ENCODE measurements at regions of chr2 and their contacts with region 1.

Region 1: DNA sequence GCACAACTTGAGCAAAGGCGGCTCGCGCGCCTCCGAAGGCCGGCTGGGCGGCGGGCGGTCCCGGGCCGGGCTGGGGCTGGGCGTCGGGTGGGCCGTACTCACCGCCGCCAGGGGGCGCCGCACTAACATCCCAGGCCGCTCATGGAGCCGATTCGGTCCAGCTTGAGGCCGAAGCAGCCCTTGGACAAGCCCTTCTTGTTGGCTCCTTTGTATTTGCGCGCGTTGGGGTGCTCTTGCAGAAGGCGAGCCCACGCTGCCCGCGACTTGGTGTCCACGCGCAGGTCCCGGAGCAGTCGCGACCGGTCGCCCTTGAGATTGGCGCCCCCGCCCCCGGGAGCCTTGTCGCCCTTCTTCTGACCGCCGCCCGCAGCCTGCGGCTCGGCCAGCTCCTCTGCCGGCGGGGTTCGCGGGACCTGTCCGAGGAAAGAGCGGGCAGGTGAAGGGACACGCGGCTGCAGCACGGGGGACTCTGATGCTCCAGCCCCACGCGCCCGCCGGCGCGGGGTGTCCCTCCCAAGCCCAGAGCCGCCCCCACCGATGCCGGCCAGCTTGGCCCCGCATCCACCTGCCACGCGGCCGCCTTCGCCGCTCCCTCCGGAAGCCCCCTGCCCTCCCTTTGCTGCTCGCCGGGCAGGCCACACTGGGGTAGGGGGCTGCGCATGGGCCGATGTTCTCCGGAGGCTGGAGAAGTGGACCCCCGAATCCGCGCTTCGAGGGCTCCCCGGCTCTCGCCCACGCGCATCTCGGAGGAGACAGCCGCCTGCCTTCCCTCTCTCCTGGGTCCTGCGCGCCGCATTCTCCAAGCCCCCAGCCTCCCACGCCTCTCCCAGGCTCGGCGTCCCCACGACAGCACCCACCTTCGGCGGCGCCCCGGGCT is 655 bp downstream of the NPPC start:
- DNase-seq: peak; percentile 88
- ATAC-seq: peak; percentile 41
- H3K4me3 Mint-ChIP-seq: peak overlapping the region; percentile 74
- H3K27ac Mint-ChIP-seq: no peak overlapping the region
- H3K4me1 Mint-ChIP-seq: peaks cover 15% of the 10 kb centered on the region
- H3K27me3 Mint-ChIP-seq: peaks cover 58% of the 10 kb centered on the region
- CTCF ChIP-seq: peak; percentile 95

Region 2: DNA sequence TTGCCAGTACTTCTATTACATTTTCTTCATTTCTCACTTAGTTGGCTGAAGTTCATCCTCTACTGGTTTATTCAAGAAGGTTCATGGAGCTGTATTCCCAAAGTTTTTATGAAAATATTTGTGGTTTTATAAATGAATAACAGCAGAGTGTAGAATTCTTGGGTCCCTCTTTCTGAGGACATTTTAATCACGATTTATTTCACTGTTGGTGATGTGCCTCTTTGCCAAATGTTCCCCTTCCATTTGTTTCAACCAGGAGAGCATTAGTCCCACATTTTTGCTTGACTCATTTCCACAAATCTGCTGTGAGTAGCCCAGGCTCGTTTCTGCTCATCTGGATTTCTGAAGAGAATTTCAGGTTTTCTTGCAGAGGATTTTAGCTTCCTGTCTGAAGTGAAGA is 118.5 kb before region 1 on chr2:
- CTCF ChIA-PET with region 1: no interaction called
- POLR2A ChIA-PET with region 1: no interaction called
- DNase-seq: no peak
- ATAC-seq: no peak
- H3K4me3 Mint-ChIP-seq: no peak overlapping the region
- H3K27ac Mint-ChIP-seq: no peak overlapping the region
- H3K4me1 Mint-ChIP-seq: peaks cover 10% of the 10 kb centered on the region
- H3K27me3 Mint-ChIP-seq: no peaks in the 10 kb centered on the region
- CTCF ChIP-seq: no peak

Region 3: DNA sequence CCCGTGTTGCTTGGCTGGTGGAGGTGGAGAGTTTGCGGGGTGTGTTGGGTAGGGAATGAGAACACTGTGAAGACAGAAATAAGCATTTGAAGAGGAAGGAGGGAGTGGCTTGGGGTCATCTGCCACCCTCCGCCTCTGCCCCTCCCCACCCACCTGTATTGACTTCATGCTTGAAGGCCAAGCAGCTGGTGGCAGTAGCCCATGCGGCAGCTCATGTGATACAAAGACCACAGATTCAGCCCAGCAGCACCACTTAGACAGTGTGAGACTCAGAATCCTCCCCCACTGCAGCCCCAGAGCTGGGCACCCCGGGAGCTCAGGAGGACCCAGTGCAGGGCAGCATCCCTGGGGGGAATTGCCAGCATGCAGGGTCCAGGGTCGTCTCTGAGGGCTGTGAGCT is 14.8 kb before region 1 on chr2:
- CTCF ChIA-PET with region 1: interaction called, 48 read pairs
- POLR2A ChIA-PET with region 1: interaction called, 3 read pairs
- DNase-seq: no peak
- ATAC-seq: peak; percentile 19; the same call in 1 of the 2 replicates
- H3K4me3 Mint-ChIP-seq: no peak overlapping the region
- H3K27ac Mint-ChIP-seq: no peak overlapping the region
- H3K4me1 Mint-ChIP-seq: peaks cover 12% of the 10 kb centered on the region
- H3K27me3 Mint-ChIP-seq: no peaks in the 10 kb centered on the region
- CTCF ChIP-seq: no peak

Region 4: DNA sequence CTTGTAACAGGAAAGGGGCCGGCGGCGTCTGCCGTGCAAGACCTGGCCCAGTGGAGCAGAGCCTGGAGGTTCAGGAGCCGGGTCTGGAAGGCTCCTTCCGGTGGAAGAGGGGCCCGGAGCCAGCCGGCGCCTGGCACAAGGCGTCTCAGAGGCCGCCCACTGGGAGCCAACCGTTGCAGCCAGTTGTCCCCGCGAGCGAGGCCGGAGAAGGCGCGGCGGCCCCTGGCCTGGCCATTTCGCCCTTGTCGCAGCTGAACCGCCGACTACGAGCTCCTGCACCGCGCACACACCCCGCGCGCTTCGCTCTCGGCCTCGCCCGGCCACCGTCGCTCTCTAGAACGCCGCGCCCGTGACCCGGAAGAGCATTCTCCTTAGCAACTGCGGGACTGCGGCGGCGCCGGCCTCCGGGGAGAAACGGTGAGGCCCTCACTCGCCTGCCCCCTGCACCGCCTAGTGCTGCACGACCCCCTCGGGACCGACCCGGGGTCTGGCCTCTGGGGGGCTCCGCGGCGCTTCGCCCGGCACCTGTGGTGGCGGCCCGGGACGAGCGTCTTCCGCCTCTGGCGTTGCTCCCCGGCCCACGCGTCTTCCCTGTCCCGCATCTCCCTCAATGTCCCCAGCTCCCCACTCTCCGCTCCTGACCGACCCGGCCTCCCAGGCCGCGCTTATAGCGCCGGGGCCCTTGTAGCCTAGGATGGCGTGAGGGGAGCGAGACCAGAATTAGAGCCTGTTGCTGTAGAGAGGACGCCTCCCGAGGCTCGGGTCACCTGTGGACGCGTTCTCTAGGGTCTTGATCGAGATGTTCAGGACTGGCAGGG is 36.0 kb after region 1 on chr2 and contains the start of gene DIS3L2:
- CTCF ChIA-PET with region 1: interaction called, 10 read pairs
- POLR2A ChIA-PET with region 1: interaction called, 4 read pairs
- DNase-seq: peak; percentile 75
- ATAC-seq: peak; percentile 89
- H3K4me3 Mint-ChIP-seq: peak within 1 kb of the TSS; percentile 79
- H3K27ac Mint-ChIP-seq: peak within 1 kb of the TSS; percentile 74
- H3K4me1 Mint-ChIP-seq: peaks cover 8% of the 10 kb centered on the region
- H3K27me3 Mint-ChIP-seq: peaks cover 12% of the 10 kb centered on the region
- CTCF ChIP-seq: no peak
- total RNA-seq, gene DIS3L2: 26.7 to 32.5 TPM (median 28.5 TPM) in 3 replicates

Region 5: GRCh38 chr2:232230557-232230956 is 305.0 kb after region 1 on chr2:
- CTCF ChIA-PET with region 1: interaction called, 21 read pairs
- POLR2A ChIA-PET with region 1: no interaction called
- DNase-seq: peak; percentile 76
- ATAC-seq: peak; percentile 85
- H3K4me3 Mint-ChIP-seq: no peak overlapping the region
- H3K27ac Mint-ChIP-seq: 0 out of 2 replicates have a peak overlapping the region, but pooled peaks have one; percentile 2
- H3K4me1 Mint-ChIP-seq: peaks cover 19% of the 10 kb centered on the region
- H3K27me3 Mint-ChIP-seq: no peaks in the 10 kb centered on the region
- CTCF ChIP-seq: no peak

Region 6: GRCh38 chr2:232327105-232328041 is 401.8 kb after region 1 on chr2:
- CTCF ChIA-PET with region 1: interaction called, 33 read pairs
- POLR2A ChIA-PET with region 1: no interaction called
- DNase-seq: peak; percentile 96
- ATAC-seq: peak; percentile 71
- H3K4me3 Mint-ChIP-seq: no peak overlapping the region
- H3K27ac Mint-ChIP-seq: peak overlapping the region; percentile 68; the same call in 1 of the 2 replicates
- H3K4me1 Mint-ChIP-seq: peaks cover 3% of the 10 kb centered on the region; the same call in 1 of the 2 replicates
- H3K27me3 Mint-ChIP-seq: no peaks in the 10 kb centered on the region
- CTCF ChIP-seq: peak; percentile 91

Region 7: DNA sequence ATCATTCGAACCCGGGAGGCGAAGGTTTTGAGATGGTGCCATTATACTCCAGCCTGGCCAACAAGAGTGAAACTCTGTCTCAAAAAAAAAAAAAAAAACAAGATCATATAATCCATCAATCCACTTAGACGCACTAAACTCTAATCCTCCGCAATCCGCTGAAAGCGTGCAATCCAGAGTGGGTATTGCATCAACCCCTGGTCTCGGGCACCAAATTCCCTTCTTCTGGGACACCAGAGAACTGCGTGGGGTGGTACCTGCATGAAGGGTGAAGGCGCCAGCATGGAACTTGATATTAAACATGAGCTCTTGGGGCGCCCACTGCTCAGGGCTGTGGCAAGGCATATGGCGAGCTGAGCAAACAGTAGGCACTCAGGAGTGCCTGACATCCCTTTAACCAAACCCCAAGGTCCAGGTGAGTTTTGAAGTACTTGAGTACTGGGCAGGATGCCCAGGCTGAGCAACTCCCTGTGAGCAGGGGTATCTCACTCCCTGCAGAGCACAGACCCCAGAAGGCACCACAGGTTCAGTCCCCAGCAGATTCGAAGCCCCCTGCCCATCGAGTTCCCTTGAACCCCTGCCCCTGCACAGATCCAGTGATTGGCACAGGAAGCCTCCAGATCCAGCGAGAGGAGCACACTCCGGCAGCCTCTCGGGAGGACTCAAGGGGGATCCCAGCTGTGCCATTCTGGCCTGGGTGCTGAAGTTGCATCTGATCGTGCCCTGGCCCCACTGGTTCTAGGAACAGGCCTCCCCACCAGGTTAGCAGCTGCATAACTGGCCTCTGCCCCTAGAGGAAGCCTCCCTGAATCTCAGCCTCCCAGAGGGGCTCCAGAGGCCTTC is 538.4 kb after region 1 on chr2:
- CTCF ChIA-PET with region 1: no interaction called
- POLR2A ChIA-PET with region 1: no interaction called
- DNase-seq: no peak
- ATAC-seq: no peak
- H3K4me3 Mint-ChIP-seq: no peak overlapping the region
- H3K27ac Mint-ChIP-seq: no peak overlapping the region
- H3K4me1 Mint-ChIP-seq: no peaks in the 10 kb centered on the region
- H3K27me3 Mint-ChIP-seq: peaks cover 4% of the 10 kb centered on the region; the same call in 1 of the 2 replicates
- CTCF ChIP-seq: no peak

Measured in WTC11 (cell line).